ENCODE measurements at regions of chr17 and their contacts with region 1.

Region 1: GRCh38 chr17:45640141-45640850 is 143.8 kb upstream of the CRHR1 start:
- DNase-seq: peak; percentile 85

Region 2: DNA sequence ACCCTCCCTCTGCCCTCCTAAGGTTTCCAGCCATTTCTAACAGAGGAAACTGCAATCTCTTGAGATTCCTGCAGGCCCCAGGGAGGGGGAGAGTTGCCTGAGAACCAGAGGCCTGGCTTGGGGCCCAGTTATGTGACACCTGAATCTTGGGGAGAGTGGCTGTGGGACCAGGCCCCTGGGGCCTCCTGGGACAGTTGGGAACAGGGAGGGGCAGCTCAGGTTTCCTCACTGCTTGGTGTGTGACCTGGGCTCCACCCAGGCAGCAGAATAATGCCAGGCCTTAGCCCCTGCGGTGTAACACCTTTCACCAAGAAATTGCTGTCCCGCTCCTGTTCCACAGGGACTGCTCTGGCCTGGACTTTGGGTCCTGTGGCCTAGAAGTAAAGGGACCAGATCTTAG is 99.5 kb after region 1 on chr17:
- in situ Hi-C with region 1: no loop called
- DNase-seq: no peak

Region 3: GRCh38 chr17:45852535-45853297 is 212.4 kb after region 1 on chr17:
- in situ Hi-C with region 1: loop called (anchors 25 kb)
- DNase-seq: peak; percentile 73